ENCODE measurements at regions of chr10 and their contacts with region 1.

Region 1: GRCh38 chr10:27504007-27504807 is at the start of gene RAB18:
- DNase-seq: peak; percentile 99 to 100
- H3K4me3 ChIP-seq: peak within 1 kb of the TSS; percentile 94
- H3K4me3 Mint-ChIP-seq: peak within 1 kb of the TSS; percentile 95
- H3K27ac Mint-ChIP-seq: peak within 1 kb of the TSS; percentile 95
- H3K4me1 ChIP-seq: peaks cover 13% of the 10 kb centered on the region; the same call in 1 of the 2 replicates
- H3K4me1 Mint-ChIP-seq: peaks cover 14% of the 10 kb centered on the region
- H3K27me3 ChIP-seq: no peaks in the 10 kb centered on the region
- H3K27me3 Mint-ChIP-seq: no peaks in the 10 kb centered on the region
- CTCF ChIP-seq: peak in 1 of 2 experiments; percentile 2
- total RNA-seq, gene RAB18: 154 and 164 TPM in 2 replicates

Region 2: GRCh38 chr10:27319752-27320561 is 184.2 kb before region 1 on chr10:
- CTCF ChIA-PET with region 1: no interaction called
- POLR2A ChIA-PET with region 1: no interaction called
- intact Hi-C with region 1: no loop called
- DNase-seq: peak; percentile 65 to 69
- H3K4me3 ChIP-seq: peak overlapping the region; percentile 40
- H3K4me3 Mint-ChIP-seq: peak overlapping the region; percentile 80
- H3K27ac Mint-ChIP-seq: no peak overlapping the region
- H3K4me1 ChIP-seq: no peaks in the 10 kb centered on the region
- H3K4me1 Mint-ChIP-seq: peaks cover 10% of the 10 kb centered on the region
- H3K27me3 ChIP-seq: no peaks in the 10 kb centered on the region
- H3K27me3 Mint-ChIP-seq: peaks cover 6% of the 10 kb centered on the region
- CTCF ChIP-seq: no peak

Region 3: DNA sequence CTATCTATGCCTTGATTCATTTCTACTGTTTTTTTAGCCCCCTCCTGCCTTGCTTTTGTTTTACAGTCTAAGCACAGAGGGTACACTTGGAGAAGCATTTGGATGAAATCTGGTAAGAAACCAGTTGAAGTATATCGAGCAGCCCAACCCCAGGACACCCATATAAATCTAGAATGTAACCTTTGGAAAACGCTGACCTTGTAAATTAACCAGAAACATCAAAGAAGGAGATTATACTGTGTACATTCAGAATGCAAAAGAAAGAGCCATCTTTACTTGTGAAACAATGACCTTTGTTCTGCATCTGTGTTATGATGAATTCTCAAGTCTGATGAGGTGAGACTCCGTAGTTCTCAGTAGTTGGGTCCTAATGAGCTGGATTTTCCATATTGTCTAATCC is 49.4 kb before region 1 on chr10:
- CTCF ChIA-PET with region 1: interaction called, 4 read pairs
- POLR2A ChIA-PET with region 1: interaction called, 6 read pairs
- intact Hi-C with region 1: loop called (anchors 2 kb)
- DNase-seq: peak in 1 of 2 experiments; percentile 37
- H3K4me3 ChIP-seq: no peak overlapping the region
- H3K4me3 Mint-ChIP-seq: peak overlapping the region; percentile 57
- H3K27ac Mint-ChIP-seq: peak overlapping the region; percentile 64
- H3K4me1 ChIP-seq: peaks cover 35% of the 10 kb centered on the region
- H3K4me1 Mint-ChIP-seq: peaks cover 47% of the 10 kb centered on the region
- H3K27me3 ChIP-seq: no peaks in the 10 kb centered on the region
- H3K27me3 Mint-ChIP-seq: no peaks in the 10 kb centered on the region
- CTCF ChIP-seq: no peak

Region 4: DNA sequence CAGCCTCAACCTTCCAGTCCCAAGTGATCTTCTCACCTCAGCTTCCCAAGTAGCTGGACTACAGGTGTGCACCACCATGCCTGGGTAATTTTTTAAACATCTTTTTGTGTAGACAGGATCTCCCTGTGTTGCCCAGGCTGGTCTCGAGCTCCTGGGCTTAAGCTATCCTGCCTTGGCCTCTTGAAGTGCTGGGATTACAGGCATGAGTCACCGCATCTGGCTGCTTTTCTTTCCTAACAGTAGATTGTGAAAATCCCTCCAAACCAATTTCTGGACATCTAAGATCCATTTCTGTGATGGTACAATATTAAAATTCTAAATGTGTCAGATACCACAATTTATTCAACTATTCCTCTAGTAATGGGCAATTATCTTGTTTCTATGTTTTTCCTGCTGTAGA is 38.6 kb after region 1 on chr10:
- CTCF ChIA-PET with region 1: no interaction called
- POLR2A ChIA-PET with region 1: no interaction called
- intact Hi-C with region 1: loop called (anchors 2 kb)
- DNase-seq: no peak
- H3K4me3 ChIP-seq: no peak overlapping the region
- H3K4me3 Mint-ChIP-seq: no peak overlapping the region
- H3K27ac Mint-ChIP-seq: no peak overlapping the region
- H3K4me1 ChIP-seq: peaks cover 6% of the 10 kb centered on the region
- H3K4me1 Mint-ChIP-seq: peaks cover 21% of the 10 kb centered on the region
- H3K27me3 ChIP-seq: no peaks in the 10 kb centered on the region
- H3K27me3 Mint-ChIP-seq: no peaks in the 10 kb centered on the region
- CTCF ChIP-seq: no peak

Measured in Caco-2 (cell line).